B cell (primary cell): ENCODE measurements at regions of chr2 and their contacts with region 1.

Region 1: GRCh38 chr2:140269000-140269399 is 1488.8 kb upstream of the NXPH2 start:
- DNase-seq: no peak
- ATAC-seq: no peak
- H3K4me3 ChIP-seq: no peak overlapping the region
- H3K4me3 Mint-ChIP-seq: no peak overlapping the region
- H3K27ac ChIP-seq: no peak overlapping the region
- H3K27ac Mint-ChIP-seq: no peak overlapping the region
- H3K4me1 ChIP-seq: no peaks in the 10 kb centered on the region
- H3K4me1 Mint-ChIP-seq: no peaks in the 10 kb centered on the region
- H3K27me3 ChIP-seq: no peaks in the 10 kb centered on the region
- H3K27me3 Mint-ChIP-seq: no peaks in the 10 kb centered on the region
- CTCF ChIP-seq: no peak

Region 2: GRCh38 chr2:139916822-139917221 is 352.2 kb before region 1 on chr2:
- CTCF ChIA-PET with region 1: no interaction called
- POLR2A ChIA-PET with region 1: no interaction called
- intact Hi-C with region 1: no loop called
- DNase-seq: no peak
- ATAC-seq: no peak
- H3K4me3 ChIP-seq: no peak overlapping the region
- H3K4me3 Mint-ChIP-seq: no peak overlapping the region
- H3K27ac ChIP-seq: no peak overlapping the region
- H3K27ac Mint-ChIP-seq: no peak overlapping the region
- H3K4me1 ChIP-seq: no peaks in the 10 kb centered on the region
- H3K4me1 Mint-ChIP-seq: no peaks in the 10 kb centered on the region
- H3K27me3 ChIP-seq: no peaks in the 10 kb centered on the region
- H3K27me3 Mint-ChIP-seq: no peaks in the 10 kb centered on the region
- CTCF ChIP-seq: no peak

Region 3: GRCh38 chr2:140242889-140243288 is 26.1 kb before region 1 on chr2:
- CTCF ChIA-PET with region 1: no interaction called
- POLR2A ChIA-PET with region 1: no interaction called
- intact Hi-C with region 1: no loop called
- DNase-seq: no peak
- ATAC-seq: no peak
- H3K4me3 ChIP-seq: no peak overlapping the region
- H3K4me3 Mint-ChIP-seq: no peak overlapping the region
- H3K27ac ChIP-seq: no peak overlapping the region
- H3K27ac Mint-ChIP-seq: no peak overlapping the region
- H3K4me1 ChIP-seq: no peaks in the 10 kb centered on the region
- H3K4me1 Mint-ChIP-seq: no peaks in the 10 kb centered on the region
- H3K27me3 ChIP-seq: no peaks in the 10 kb centered on the region
- H3K27me3 Mint-ChIP-seq: no peaks in the 10 kb centered on the region
- CTCF ChIP-seq: no peak

Region 4: DNA sequence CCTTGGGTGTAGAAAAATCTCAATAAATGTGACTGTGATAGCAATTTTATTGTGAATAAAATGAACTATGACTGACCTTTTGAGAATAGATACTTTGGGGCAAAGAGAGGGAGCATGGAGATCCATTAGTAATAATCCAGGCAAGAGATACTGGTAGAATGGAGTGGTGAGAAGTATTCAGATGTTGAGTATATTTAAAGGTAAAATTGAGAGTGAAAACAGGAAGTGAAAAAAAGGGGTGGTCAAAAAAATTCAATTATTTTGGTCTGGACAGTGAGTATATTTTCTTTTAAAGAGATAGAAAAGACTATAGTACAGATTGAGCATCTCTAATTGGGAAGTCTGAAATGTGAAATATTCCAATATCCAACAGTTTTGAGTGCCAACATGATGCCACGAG is 26.8 kb after region 1 on chr2:
- CTCF ChIA-PET with region 1: no interaction called
- POLR2A ChIA-PET with region 1: no interaction called
- intact Hi-C with region 1: loop called (anchors 5 kb)
- DNase-seq: no peak
- ATAC-seq: no peak
- H3K4me3 ChIP-seq: no peak overlapping the region
- H3K4me3 Mint-ChIP-seq: no peak overlapping the region
- H3K27ac ChIP-seq: no peak overlapping the region
- H3K27ac Mint-ChIP-seq: no peak overlapping the region
- H3K4me1 ChIP-seq: no peaks in the 10 kb centered on the region
- H3K4me1 Mint-ChIP-seq: no peaks in the 10 kb centered on the region
- H3K27me3 ChIP-seq: no peaks in the 10 kb centered on the region
- H3K27me3 Mint-ChIP-seq: no peaks in the 10 kb centered on the region
- CTCF ChIP-seq: no peak